GM10248 (cell line): ENCODE measurements at regions of chr2 and their contacts with region 1.

Region 1: GRCh38 chr2:230684270-230685168 is 28.1 kb upstream of the CAB39 start:
- DNase-seq: no peak
- CTCF ChIP-seq: no peak

Region 2: DNA sequence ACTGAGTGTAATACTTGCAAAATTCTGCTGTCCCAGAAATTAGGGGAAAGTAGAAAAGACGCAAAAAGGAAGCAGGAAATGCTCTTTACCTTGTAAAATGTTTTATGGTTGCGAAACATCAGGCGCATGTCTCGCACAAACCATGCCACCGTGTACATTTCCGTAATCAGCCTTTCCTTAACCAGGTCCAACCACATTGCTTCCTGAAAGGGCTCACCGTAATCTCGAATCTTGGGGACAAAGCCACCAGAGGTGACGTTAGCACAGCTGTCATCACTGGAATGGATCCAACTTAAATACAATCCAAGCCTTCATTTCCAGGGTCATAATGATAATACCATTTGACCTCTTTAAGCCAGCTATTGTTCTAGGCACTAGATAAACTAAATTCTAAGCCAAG is 514.0 kb before region 1 on chr2:
- CTCF ChIA-PET with region 1: no interaction called
- POLR2A ChIA-PET with region 1: no interaction called
- DNase-seq: no peak
- CTCF ChIP-seq: no peak

Region 3: DNA sequence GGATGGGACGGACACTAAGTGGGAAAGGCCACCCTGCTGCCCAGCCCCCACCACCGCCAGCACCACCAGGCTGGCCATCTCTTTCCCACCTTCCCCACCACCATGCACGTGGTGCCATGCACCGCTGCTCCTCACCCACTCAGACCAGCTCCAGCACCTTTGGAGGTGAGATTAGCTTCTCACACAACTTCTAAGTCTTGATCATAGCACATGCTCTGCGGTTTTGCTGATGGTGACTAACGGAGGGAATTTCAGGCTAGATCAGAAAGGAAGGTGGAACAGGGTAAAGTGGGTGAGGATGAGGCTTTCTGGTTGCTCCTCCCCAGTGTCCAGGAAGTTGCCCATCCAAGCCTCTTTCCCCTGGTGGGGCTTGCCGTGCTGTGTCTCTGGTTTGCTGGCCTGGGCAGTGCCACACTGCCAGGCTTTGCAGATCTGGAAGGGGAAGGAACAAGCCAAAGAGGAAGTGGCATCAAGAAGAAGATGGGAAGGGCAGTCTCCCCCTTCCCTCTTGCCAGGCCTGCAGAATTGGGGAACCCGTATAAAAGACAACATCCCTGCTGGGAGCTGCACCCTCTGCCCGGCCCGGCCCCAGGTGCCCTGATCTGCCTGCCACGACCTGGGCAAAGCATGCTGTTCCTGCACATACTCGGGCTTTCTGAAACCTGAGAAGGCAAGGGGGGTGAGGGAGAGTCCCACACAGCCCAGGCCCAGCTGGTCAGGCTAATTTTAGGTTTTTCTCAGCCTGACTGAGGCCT is 16.2 kb before region 1 on chr2:
- CTCF ChIA-PET with region 1: interaction called, 36 read pairs
- POLR2A ChIA-PET with region 1: no interaction called
- DNase-seq: peak; percentile 74
- CTCF ChIP-seq: no peak